ENCODE measurements at regions of chr4 and their contacts with region 1.

Region 1: GRCh38 chr4:129093191-129093920 is at the start of gene SCLT1:
- DNase-seq: peak; percentile 99
- H3K4me3 ChIP-seq: peak within 1 kb of the TSS; percentile 86 to 97 (median 88)
- H3K27ac ChIP-seq: peak within 1 kb of the TSS; percentile 89
- H3K4me1 ChIP-seq: peaks cover 26% of the 10 kb centered on the region
- H3K27me3 ChIP-seq: no peaks in the 10 kb centered on the region
- CTCF ChIP-seq: no peak
- POLR2A ChIP-seq: peak; percentile 64
- total RNA-seq, gene SCLT1: 14.0 and 16.3 TPM in 2 replicates

Region 2: DNA sequence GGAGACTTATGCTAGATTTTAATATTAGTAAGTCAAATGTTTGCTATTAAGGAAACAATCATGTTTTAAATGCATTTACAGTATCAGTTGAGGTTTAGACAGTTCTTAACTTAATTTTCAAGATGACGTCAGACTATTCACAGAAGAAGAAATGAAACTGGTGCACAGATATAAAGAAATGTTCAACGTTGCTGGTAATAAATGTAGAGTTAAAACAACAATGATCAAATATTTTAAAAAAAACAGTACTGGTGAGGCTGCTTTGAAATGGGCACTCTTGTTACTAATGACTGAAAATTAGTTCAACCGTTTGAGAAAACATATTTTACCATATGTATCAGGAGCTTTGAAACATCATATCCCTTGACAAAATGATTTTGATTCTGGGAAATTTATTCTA is 1083.9 kb before region 1 on chr4:
- CTCF ChIA-PET with region 1: no interaction called
- POLR2A ChIA-PET with region 1: no interaction called
- dilution Hi-C with region 1: no loop called
- intact Hi-C with region 1: no loop called
- DNase-seq: no peak
- H3K4me3 ChIP-seq: no peak overlapping the region
- H3K27ac ChIP-seq: no peak overlapping the region
- H3K4me1 ChIP-seq: no peaks in the 10 kb centered on the region
- H3K27me3 ChIP-seq: no peaks in the 10 kb centered on the region
- CTCF ChIP-seq: no peak
- POLR2A ChIP-seq: no peak

Region 3: GRCh38 chr4:128528793-128529553 is 564.4 kb before region 1 on chr4:
- CTCF ChIA-PET with region 1: no interaction called
- POLR2A ChIA-PET with region 1: interaction called, 6 read pairs
- dilution Hi-C with region 1: no loop called
- intact Hi-C with region 1: loop called (anchors 10 kb)
- DNase-seq: peak; percentile 88
- H3K4me3 ChIP-seq: no peak overlapping the region
- H3K27ac ChIP-seq: peak overlapping the region; percentile 95
- H3K4me1 ChIP-seq: peaks cover 29% of the 10 kb centered on the region
- H3K27me3 ChIP-seq: no peaks in the 10 kb centered on the region
- CTCF ChIP-seq: no peak
- POLR2A ChIP-seq: no peak

Region 4: DNA sequence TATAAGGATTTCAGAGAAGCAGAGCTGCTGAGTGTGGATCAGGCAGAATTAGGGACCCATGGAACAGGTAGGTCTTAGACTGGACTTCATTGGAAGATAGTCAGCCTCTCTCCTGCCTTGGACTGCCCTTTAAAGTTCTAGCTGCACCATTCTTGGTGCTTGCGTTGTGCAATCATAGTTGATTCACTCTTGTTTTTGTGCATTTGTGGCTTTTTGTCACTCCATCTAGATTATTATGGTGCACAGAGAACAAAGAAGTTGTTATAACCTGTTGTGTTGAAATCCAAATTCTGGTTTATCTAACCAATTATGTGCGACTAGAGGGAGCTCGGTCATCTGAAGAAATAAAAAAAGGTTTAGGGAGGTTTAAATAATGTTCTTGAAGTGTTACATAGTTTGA is 224.6 kb before region 1 on chr4:
- CTCF ChIA-PET with region 1: no interaction called
- POLR2A ChIA-PET with region 1: no interaction called
- dilution Hi-C with region 1: no loop called
- intact Hi-C with region 1: loop called (anchors 5 kb)
- DNase-seq: no peak
- H3K4me3 ChIP-seq: no peak overlapping the region
- H3K27ac ChIP-seq: no peak overlapping the region
- H3K4me1 ChIP-seq: no peaks in the 10 kb centered on the region
- H3K27me3 ChIP-seq: no peaks in the 10 kb centered on the region
- CTCF ChIP-seq: no peak
- POLR2A ChIP-seq: no peak

Region 5: DNA sequence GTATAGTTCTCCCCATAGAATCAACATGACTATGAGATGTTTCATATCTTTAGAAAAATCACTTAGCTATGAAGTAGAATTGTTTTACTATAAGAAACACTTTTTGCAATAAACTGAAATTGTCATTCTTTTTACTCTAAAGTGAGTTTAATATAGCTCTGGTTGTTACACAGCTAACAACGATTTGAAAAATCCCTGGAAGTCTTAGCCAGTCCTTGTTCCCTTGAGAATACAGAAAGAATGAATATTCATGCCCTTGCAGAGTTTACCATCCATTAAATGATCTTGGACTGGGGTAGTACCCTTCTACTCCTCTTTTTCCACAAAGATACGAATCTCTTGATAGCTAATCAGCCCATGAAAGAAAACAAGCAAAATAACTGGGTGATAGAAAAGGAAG is 142.0 kb before region 1 on chr4:
- CTCF ChIA-PET with region 1: no interaction called
- POLR2A ChIA-PET with region 1: no interaction called
- dilution Hi-C with region 1: no loop called
- intact Hi-C with region 1: loop called (anchors 2 kb)
- DNase-seq: no peak
- H3K4me3 ChIP-seq: no peak overlapping the region
- H3K27ac ChIP-seq: no peak overlapping the region
- H3K4me1 ChIP-seq: peaks cover 14% of the 10 kb centered on the region
- H3K27me3 ChIP-seq: no peaks in the 10 kb centered on the region
- CTCF ChIP-seq: no peak
- POLR2A ChIP-seq: no peak

Region 6: DNA sequence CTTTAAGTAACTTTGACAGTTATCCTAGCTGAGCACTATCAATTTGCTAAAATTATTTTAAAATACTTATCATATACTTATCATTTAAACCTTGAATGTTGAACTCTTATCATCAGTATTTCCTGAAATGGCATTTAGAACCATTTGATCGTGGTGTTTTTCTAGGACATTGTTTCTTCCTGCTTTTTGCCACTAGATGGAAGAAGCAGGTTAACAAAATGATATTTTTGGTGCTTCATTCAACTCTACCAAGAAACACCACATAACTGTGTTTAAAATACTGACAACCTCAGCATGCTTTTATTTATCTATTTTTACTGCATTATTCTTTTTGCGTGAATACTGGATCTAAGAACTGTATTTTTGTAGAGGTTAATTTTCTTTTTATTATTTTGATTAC is 47.2 kb after region 1 on chr4:
- CTCF ChIA-PET with region 1: no interaction called
- POLR2A ChIA-PET with region 1: no interaction called
- dilution Hi-C with region 1: no loop called
- intact Hi-C with region 1: no loop called
- DNase-seq: no peak
- H3K4me3 ChIP-seq: no peak overlapping the region
- H3K27ac ChIP-seq: no peak overlapping the region
- H3K4me1 ChIP-seq: no peaks in the 10 kb centered on the region
- H3K27me3 ChIP-seq: peaks cover 0 to 2% of the 10 kb centered on the region in 2 experiments
- CTCF ChIP-seq: no peak
- POLR2A ChIP-seq: no peak

Region 7: DNA sequence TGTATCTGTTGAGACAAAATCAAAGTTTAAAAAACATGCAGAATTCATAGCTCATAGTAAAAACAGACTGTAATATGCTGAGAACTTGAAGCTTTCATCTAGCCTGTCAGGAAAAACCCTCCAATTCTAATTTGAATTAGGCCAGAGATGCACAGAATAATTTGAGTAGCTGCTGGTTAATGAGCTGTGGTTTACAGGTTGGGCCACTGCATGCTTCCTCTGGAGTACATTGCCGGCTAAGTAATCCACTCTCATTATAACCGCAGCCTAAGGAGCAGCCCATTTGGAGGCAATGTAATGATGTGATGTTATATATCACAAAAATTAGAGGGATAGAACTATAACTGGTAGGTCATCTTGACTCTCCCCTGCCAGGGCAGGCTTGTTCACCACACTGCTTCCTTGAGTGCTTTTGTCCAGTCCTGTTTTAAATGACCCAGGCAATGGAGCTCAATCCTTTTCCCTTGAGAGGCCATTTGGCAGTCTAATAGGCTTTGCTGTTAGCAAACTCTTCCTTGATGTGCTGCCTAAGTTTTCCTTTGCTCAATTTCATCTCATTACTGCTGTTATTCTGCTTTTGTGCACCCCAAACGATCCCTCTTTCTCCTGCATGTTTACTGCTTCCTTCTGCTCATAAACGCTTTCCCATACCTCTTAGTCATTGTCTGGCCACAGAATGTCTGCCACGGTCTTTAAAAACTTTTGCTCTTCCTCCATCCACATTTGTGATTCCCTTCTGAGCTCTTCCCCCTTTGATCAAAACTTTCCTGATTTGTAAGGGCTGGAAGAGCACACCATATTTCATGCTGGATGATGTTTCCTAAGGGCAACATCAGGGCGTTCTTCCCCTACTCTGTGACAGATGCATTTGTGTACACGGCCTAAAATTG is 233.5 kb after region 1 on chr4:
- CTCF ChIA-PET with region 1: no interaction called
- POLR2A ChIA-PET with region 1: no interaction called
- dilution Hi-C with region 1: no loop called
- intact Hi-C with region 1: no loop called
- DNase-seq: no peak
- H3K4me3 ChIP-seq: no peak overlapping the region
- H3K27ac ChIP-seq: no peak overlapping the region
- H3K4me1 ChIP-seq: peaks cover 2% of the 10 kb centered on the region
- H3K27me3 ChIP-seq: peaks cover 4 to 6% of the 10 kb centered on the region in 2 experiments
- CTCF ChIP-seq: no peak
- POLR2A ChIP-seq: no peak

Region 8: DNA sequence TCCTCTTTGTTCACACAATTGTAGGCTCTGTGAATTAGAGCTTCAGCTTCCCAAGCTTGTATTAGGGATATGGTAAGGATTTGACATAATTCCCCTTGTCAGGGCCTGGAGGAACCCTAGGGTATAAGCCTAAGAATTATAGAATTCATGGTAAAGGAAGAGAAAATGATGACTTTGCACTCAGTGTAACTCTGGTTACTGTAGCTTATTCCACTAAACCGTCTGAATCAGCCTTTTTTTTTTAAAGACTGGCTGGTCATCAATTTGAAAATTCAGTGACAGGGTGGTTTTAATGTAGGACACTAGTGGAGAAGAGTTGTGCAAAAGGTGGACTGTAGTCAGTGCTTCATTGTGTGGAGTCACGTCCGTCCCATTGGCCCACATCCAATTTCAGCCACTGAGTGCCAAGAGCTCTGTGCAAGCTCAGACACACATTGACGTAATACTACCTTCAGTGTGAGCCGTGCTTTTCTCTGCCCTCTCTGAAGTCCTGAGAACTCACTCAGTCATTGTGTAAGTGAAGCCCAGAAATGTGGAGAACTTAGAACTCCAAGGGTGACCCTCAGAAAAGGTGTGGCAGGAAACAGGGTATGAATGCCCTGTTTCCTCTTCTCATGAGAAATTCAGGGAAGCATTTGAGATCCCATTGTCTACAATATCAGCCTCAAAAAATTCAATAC is 452.4 kb after region 1 on chr4:
- CTCF ChIA-PET with region 1: no interaction called
- POLR2A ChIA-PET with region 1: no interaction called
- dilution Hi-C with region 1: no loop called
- intact Hi-C with region 1: loop called (anchors 5 kb)
- DNase-seq: peak; percentile 97
- H3K4me3 ChIP-seq: peak overlapping the region in 1 of 3 experiments; percentile 25
- H3K27ac ChIP-seq: peak overlapping the region; percentile 87
- H3K4me1 ChIP-seq: peaks cover 24% of the 10 kb centered on the region
- H3K27me3 ChIP-seq: no peaks in the 10 kb centered on the region
- CTCF ChIP-seq: no peak
- POLR2A ChIP-seq: peak; percentile 26